ENCODE measurements at regions of chr15 and their contacts with region 1.

Region 1: GRCh38 chr15:45704329-45705249 is 69.8 kb downstream of the SQOR start:
- DNase-seq: peak; percentile 67
- H3K4me3 ChIP-seq: peak overlapping the region; percentile 30 to 56 (median 48)
- H3K27ac ChIP-seq: peak overlapping the region in 3 of 4 donors; percentile 41 to 71 (median 65)
- H3K4me1 ChIP-seq: peaks cover 0 to 17% (median 14%) of the 10 kb centered on the region in 4 donors
- H3K27me3 ChIP-seq: no peaks in the 10 kb centered on the region
- CTCF ChIP-seq: no peak
- EP300 ChIP-seq: no peak
- POLR2A ChIP-seq: no peak

Region 2: GRCh38 chr15:45660231-45660979 is 44.2 kb before region 1 on chr15:
- intact Hi-C with region 1: loop called (anchors 5 kb)
- DNase-seq: peak; percentile 72
- H3K4me3 ChIP-seq: no peak overlapping the region
- H3K27ac ChIP-seq: peak overlapping the region in 3 of 4 donors; percentile 66 to 83 (median 73)
- H3K4me1 ChIP-seq: peaks cover 0 to 47% (median 39%) of the 10 kb centered on the region in 4 donors
- H3K27me3 ChIP-seq: no peaks in the 10 kb centered on the region
- CTCF ChIP-seq: no peak
- EP300 ChIP-seq: no peak
- POLR2A ChIP-seq: no peak

Region 3: GRCh38 chr15:45919806-45920205 is 215.2 kb after region 1 on chr15:
- intact Hi-C with region 1: no loop called
- DNase-seq: no peak
- H3K4me3 ChIP-seq: no peak overlapping the region
- H3K27ac ChIP-seq: no peak overlapping the region
- H3K4me1 ChIP-seq: peaks cover 0 to 4% (median 0%) of the 10 kb centered on the region in 4 donors
- H3K27me3 ChIP-seq: no peaks in the 10 kb centered on the region
- CTCF ChIP-seq: no peak
- EP300 ChIP-seq: no peak
- POLR2A ChIP-seq: no peak

Measured in sigmoid colon (tissue), 7 donors.